ENCODE measurements at regions of chr9 and their contacts with region 1.

Region 1: DNA sequence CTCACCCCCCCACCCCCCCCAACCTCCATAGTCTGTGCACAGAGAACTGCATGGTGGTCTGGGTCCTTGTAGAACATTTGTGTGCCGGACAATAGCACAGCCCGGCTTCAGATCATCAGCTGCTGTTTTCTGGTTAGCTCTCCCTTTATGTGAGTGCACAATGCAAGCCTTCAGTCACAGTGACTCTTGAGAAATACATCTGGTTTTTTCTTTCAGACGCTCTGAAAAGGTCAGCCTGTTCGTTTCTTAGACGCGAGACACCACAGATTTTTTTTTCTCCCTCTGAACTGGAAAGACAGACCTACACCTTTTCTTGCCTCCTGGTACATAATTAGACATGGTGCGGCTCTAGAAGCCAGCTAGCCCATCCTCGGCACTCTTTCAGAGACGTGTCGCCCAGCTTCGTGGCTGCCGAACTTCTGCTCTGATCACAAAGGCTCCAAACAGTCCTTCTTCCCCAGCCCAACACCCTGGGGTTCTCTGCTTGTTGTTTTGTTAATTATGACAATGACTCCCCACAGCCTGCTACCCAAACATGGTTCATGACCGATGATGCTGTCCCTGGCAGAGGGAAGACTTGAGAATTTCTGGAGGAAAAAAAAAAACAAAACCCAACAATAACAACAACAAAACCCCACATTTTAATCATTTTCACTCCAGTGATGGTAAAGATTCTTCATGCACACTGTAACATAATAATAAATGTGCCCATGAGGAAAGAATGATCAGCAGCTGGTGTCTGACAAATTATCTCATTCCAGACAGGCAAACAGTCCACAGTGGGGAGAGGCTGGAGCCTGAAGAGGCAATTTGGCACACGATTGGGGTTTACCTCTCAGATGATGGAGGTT is 241.4 kb upstream of the ZNF462 start:
- DNase-seq: no peak
- H3K4me3 ChIP-seq: no peak overlapping the region
- H3K27ac ChIP-seq: no peak overlapping the region
- H3K4me1 ChIP-seq: no peaks in the 10 kb centered on the region
- CTCF ChIP-seq: no peak

Region 2: GRCh38 chr9:106657926-106658325 is 36.4 kb after region 1 on chr9:
- CTCF ChIA-PET with region 1: no interaction called
- POLR2A ChIA-PET with region 1: no interaction called
- intact Hi-C with region 1: loop called (anchors 2 kb)
- DNase-seq: no peak
- H3K4me3 ChIP-seq: no peak overlapping the region
- H3K27ac ChIP-seq: no peak overlapping the region
- H3K4me1 ChIP-seq: no peaks in the 10 kb centered on the region
- CTCF ChIP-seq: no peak